SK-N-SH (cell line): ENCODE measurements at regions of chr1 and their contacts with region 1.

Region 1: DNA sequence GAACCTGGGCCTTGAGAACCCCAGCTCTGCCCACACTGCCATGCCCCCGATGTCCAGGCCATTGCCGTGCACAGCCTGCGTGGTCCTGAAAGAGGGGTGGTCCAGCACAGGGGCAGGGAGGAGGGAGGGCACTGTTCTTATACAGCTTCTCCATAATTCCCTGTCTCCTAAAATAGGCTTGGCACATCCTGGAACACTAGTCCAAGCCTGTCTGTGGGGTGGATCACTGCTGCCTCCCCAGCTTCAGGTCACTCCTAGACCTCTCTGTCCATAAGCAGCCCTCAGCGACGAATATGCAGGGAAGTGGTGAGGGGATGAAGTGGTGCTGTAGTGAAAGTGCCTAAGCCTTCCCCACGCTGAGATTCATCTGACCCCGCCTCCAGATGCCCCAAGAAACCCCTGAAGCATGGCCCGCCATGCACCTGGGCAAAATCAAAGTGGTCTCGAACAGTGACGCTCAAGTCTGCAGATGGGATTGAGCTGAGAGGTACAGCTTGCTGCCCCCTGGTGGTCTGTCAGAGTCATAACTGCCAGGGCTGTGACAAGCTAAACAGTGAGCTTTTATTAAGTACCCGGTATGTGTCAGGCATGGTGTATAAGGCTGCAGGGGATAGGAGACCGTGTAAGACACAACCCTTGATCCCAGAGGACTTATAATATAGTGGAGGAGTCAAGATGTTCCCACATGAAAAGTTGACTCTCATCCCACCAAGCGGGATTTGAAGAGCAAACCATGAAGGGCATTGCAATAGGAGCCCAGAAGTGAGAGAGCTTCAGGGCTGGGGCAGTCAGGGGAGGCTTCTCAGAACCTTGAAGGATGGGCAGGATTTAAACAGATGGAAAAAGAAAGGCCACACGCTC is 66.6 kb downstream of the FAM163A start:
- DNase-seq: peak; percentile 81
- H3K4me3 ChIP-seq: no peak overlapping the region; a peak in 1 of 4 replicates
- H3K27ac ChIP-seq: peak overlapping the region in 1 of 2 experiments; percentile 79; a peak in 2 of 4 replicates
- H3K4me1 ChIP-seq: peaks cover 0 to 58% of the 10 kb centered on the region in 2 experiments; a peak in 1 of 4 replicates
- H3K27me3 ChIP-seq: peaks cover 10% of the 10 kb centered on the region; the same call in 1 of the 2 replicates
- CTCF ChIP-seq: peak; percentile 92
- EP300 ChIP-seq: no peak
- RAD21 ChIP-seq: peak; percentile 84

Region 2: GRCh38 chr1:179728271-179728670 is 81.5 kb before region 1 on chr1:
- CTCF ChIA-PET with region 1: interaction called, 32 read pairs
- POLR2A ChIA-PET with region 1: no interaction called
- DNase-seq: peak; percentile 22
- H3K4me3 ChIP-seq: no peak overlapping the region
- H3K27ac ChIP-seq: peak overlapping the region in 1 of 2 experiments; percentile 32; a peak in 2 of 4 replicates
- H3K4me1 ChIP-seq: peaks cover 0 to 11% of the 10 kb centered on the region in 2 experiments; a peak in 1 of 4 replicates
- H3K27me3 ChIP-seq: peaks cover 11% of the 10 kb centered on the region; the same call in 1 of the 2 replicates
- CTCF ChIP-seq: no peak
- EP300 ChIP-seq: peak in 1 of 2 experiments; percentile 53; a peak in 2 of 4 replicates
- RAD21 ChIP-seq: no peak

Region 3: GRCh38 chr1:179770884-179771502 is 38.7 kb before region 1 on chr1:
- CTCF ChIA-PET with region 1: interaction called, 19 read pairs
- POLR2A ChIA-PET with region 1: no interaction called
- DNase-seq: no peak
- H3K4me3 ChIP-seq: no peak overlapping the region; a peak in 1 of 4 replicates
- H3K27ac ChIP-seq: peak overlapping the region in 1 of 2 experiments; percentile 56; a peak in 1 of 4 replicates
- H3K4me1 ChIP-seq: peaks cover 0 to 39% of the 10 kb centered on the region in 2 experiments; a peak in 2 of 4 replicates
- H3K27me3 ChIP-seq: no peaks in the 10 kb centered on the region
- CTCF ChIP-seq: no peak
- EP300 ChIP-seq: no peak
- RAD21 ChIP-seq: no peak

Region 4: GRCh38 chr1:179794669-179795068 is 15.1 kb before region 1 on chr1:
- CTCF ChIA-PET with region 1: interaction called, 186 read pairs
- POLR2A ChIA-PET with region 1: interaction called, 4 read pairs
- DNase-seq: peak; percentile 60
- H3K4me3 ChIP-seq: no peak overlapping the region
- H3K27ac ChIP-seq: peak overlapping the region in 1 of 2 experiments; percentile 94; a peak in 2 of 4 replicates
- H3K4me1 ChIP-seq: peaks cover 0 to 79% of the 10 kb centered on the region in 2 experiments; a peak in 2 of 4 replicates
- H3K27me3 ChIP-seq: no peaks in the 10 kb centered on the region
- CTCF ChIP-seq: no peak
- EP300 ChIP-seq: peak in 1 of 2 experiments; percentile 89; a peak in 2 of 4 replicates
- RAD21 ChIP-seq: no peak; the same call in 1 of the 2 replicates

Region 5: DNA sequence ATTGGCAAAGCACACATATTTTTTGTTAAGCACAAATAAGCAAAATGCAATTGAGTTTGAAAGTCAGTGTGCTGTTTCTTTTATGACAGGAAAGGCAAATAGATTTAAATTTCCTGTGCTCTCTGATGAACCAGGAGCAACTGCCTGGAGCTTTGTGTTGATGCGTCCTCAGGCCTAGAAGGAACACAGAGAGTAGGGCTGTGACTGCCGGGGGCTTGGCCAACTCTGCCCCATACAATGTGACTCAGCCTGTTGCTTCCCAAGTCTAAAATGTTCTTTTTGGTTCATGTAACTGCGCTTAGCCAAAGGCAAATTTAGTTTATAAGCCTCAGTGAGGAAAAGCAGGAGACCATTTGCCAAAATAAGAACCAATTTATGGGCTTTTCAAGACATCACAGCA is 30.4 kb after region 1 on chr1:
- CTCF ChIA-PET with region 1: interaction called, 19 read pairs
- POLR2A ChIA-PET with region 1: no interaction called
- DNase-seq: no peak
- H3K4me3 ChIP-seq: no peak overlapping the region
- H3K27ac ChIP-seq: no peak overlapping the region
- H3K4me1 ChIP-seq: peaks cover 0 to 5% of the 10 kb centered on the region in 2 experiments; a peak in 1 of 4 replicates
- H3K27me3 ChIP-seq: no peaks in the 10 kb centered on the region
- CTCF ChIP-seq: no peak
- EP300 ChIP-seq: no peak
- RAD21 ChIP-seq: no peak

Region 6: DNA sequence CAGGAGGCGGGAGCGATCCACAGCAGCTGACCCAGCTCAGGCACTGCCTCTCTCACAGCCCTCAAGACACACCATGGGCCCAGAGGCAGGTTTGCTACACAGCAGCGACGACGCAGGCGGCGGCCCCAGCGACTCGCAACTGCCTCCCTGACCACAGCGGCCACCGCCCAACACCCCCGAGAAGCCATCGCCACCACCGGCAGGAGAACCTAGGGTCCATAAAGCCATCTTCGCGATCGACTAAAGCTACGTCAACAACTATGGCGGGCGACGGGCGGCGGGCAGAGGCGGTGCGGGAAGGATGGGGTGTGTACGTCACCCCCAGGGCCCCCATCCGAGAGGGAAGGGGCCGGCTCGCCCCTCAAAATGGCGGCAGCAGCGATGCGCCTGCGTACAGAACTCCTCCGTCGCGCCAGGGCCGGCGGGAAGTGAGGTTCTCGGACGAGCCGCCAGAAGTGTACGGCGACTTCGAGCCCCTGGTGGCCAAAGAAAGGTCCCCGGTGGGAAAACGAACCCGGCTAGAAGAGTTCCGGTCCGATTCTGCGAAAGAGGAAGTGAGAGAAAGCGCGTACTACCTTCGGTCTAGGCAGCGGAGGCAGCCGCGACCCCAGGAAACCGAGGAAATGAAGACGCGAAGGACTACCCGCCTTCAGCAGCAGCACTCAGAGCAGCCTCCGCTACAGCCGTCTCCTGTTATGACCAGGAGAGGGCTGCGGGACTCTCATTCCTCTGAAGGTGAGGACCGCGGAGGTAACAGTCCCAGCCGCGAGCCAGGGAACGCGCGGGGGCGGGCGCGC is 72.7 kb after region 1 on chr1 and contains the start of gene TOR1AIP1:
- CTCF ChIA-PET with region 1: interaction called, 13 read pairs
- POLR2A ChIA-PET with region 1: interaction called, 3 read pairs
- DNase-seq: peak; percentile 96
- H3K4me3 ChIP-seq: peak within 1 kb of the TSS; percentile 79 to 97
- H3K27ac ChIP-seq: peak within 1 kb of the TSS; percentile 98 to 99
- H3K4me1 ChIP-seq: peaks cover 9 to 14% of the 10 kb centered on the region in 2 experiments; a peak in 2 of 4 replicates
- H3K27me3 ChIP-seq: no peaks in the 10 kb centered on the region
- CTCF ChIP-seq: peak; percentile 31
- EP300 ChIP-seq: peak; percentile 38 to 39; a peak in 1 of 4 replicates
- RAD21 ChIP-seq: peak; percentile 31; the same call in 1 of the 2 replicates
- polyA plus RNA-seq, gene TOR1AIP1: 11.8 and 15.1 TPM in 2 replicates